ENCODE measurements at regions of chr16 and their contacts with region 1.

Region 1: GRCh38 chr16:84738255-84739038 is 38.6 kb downstream of the USP10 start:
- DNase-seq: peak; percentile 77
- ATAC-seq: peak; percentile 62

Region 2: GRCh38 chr16:84672276-84673202 is 65.9 kb before region 1 on chr16:
- intact Hi-C with region 1: loop called (anchors 5 kb)
- DNase-seq: peak; percentile 90
- ATAC-seq: peak; percentile 89

Measured in Right ventricle myocardium superior (tissue), 1 donor.